ENCODE measurements at regions of chr1 and their contacts with region 1.

Region 1: GRCh38 chr1:46340404-46341221 is at the start of gene NSUN4:
- DNase-seq: peak; percentile 48
- H3K4me3 ChIP-seq: peak within 1 kb of the TSS; percentile 70 to 81 (median 76)
- H3K27ac ChIP-seq: peak within 1 kb of the TSS; percentile 95 to 98 (median 97)
- H3K4me1 ChIP-seq: peaks cover 4 to 34% (median 12%) of the 10 kb centered on the region in 3 donors
- H3K27me3 ChIP-seq: no peaks in the 10 kb centered on the region
- CTCF ChIP-seq: peak; percentile 53 to 75 (median 58)
- POLR2A ChIP-seq: peak in 3 of 4 donors; percentile 45 to 84 (median 50)
- total RNA-seq, gene NSUN4: 10.1 to 22.1 (median 16.2) TPM

Region 2: GRCh38 chr1:46303038-46303871 is 37.4 kb before region 1 on chr1 and contains the starts of genes LRRC41 and UQCRH:
- intact Hi-C with region 1: loop called (anchors 5 kb)
- DNase-seq: peak; percentile 70
- H3K4me3 ChIP-seq: peak within 1 kb of the TSS; percentile 78 to 97 (median 84)
- H3K27ac ChIP-seq: peak within 1 kb of the TSS; percentile 97 to 99 (median 98)
- H3K4me1 ChIP-seq: peaks cover 26 to 74% (median 43%) of the 10 kb centered on the region in 3 donors
- H3K27me3 ChIP-seq: no peaks in the 10 kb centered on the region
- CTCF ChIP-seq: no peak
- POLR2A ChIP-seq: peak in 3 of 4 donors; percentile 29 to 87 (median 85)
- total RNA-seq, gene LRRC41: 44.1 to 66.4 (median 57.6) TPM
- total RNA-seq, gene UQCRH: 329 to 618 (median 564) TPM

Region 3: DNA sequence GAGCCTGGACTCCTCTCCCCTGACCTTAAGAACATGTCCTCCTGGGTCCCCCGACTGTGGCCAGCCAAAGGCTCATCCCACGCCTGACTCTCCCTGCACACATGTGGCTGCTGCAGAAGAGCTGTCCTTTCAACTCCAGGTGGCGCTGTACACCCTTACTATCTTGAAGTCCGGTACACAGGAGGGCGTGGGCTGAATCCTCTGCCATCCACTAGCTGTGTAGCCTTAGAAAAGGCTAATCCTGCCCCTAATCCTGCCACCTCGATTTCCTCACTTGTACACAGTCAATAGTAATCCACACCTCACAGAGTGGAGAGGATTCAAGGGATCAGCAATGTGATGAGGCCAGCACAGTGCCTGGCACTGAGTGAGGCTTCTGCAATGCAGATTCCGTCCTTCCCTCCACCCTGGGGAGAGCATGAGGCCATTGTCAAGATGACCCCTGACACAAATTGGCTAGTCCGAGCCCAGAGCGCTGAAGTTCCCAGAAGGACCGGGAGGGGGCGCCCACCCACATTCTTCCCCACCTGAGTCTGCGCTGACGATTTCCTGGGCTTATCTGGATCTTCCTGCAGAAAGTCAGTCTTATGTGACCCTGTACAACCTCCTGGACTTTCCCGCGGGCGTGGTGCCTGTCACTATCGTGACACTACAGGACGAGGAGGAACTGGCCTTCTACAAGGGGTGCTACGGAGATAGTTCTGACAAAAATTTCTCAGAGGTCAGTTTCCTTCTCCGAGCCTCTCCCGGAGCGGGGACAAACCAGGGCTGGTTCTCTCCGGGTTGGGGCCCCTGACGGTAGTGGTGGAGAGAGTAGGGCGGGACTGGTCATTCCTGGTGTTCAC is 101.9 kb after region 1 on chr1:
- intact Hi-C with region 1: no loop called
- DNase-seq: no peak
- H3K4me3 ChIP-seq: peak overlapping the region in 3 of 4 donors; percentile 32 to 62 (median 38)
- H3K27ac ChIP-seq: peak overlapping the region in 3 of 4 donors; percentile 16 to 48 (median 33)
- H3K4me1 ChIP-seq: peaks cover 2 to 19% (median 4%) of the 10 kb centered on the region in 3 donors
- H3K27me3 ChIP-seq: peaks cover 6 to 50% (median 7%) of the 10 kb centered on the region in 4 donors
- CTCF ChIP-seq: peak; percentile 64 to 86 (median 80)
- POLR2A ChIP-seq: no peak

Measured in esophagus squamous epithelium (tissue), 5 donors.